SK-N-SH (cell line): ENCODE measurements at regions of chr22 and their contacts with region 1.

Region 1: GRCh38 chr22:37817705-37818408 is 5.3 kb upstream of the GALR3 start:
- DNase-seq: peak; percentile 98
- H3K4me3 ChIP-seq: peak overlapping the region; percentile 28 to 30; a peak in 3 of 4 replicates
- H3K27ac ChIP-seq: peak overlapping the region; percentile 38 to 73; a peak in 3 of 4 replicates
- H3K4me1 ChIP-seq: peaks cover 0 to 8% of the 10 kb centered on the region in 2 experiments; a peak in 1 of 4 replicates
- H3K27me3 ChIP-seq: no peaks in the 10 kb centered on the region
- CTCF ChIP-seq: peak; percentile 90
- EP300 ChIP-seq: no peak
- RAD21 ChIP-seq: peak; percentile 93

Region 2: DNA sequence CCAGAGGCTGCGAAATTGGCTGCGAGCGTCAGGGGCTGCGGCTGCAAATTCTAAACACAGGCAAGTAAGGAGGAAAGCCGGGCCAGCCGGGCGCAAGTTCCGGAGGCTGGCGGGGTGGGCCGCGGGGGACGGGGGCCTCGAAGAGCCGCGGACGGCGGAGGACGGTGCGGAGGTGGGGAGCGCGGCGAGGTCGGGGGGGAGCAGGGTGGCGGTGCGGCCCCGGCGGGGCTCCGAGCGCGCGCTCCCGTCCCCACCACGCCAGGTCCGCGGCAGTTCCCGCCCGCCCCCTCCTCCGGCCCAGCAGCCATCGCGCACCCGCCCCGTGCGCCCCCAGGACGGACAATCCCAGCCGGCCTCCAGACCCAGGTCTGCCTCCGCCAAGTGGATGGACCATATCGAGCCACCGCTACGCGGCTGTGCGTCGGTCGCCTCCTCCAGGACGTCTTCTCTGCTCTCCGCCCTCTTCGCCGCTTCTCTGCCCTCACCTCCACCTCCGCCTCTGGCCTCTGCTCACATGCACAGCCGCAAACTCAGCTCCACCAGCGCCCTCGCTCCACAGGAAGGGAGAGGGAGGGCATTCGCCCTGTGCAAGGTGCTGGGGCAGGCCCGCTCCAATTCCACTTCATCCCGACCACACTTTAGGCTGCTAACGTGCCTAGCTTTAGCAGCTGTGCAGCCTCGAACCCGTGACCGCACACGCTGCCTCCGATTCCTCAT is 397.7 kb before region 1 on chr22:
- CTCF ChIA-PET with region 1: no interaction called
- POLR2A ChIA-PET with region 1: no interaction called
- DNase-seq: peak; percentile 84
- H3K4me3 ChIP-seq: peak overlapping the region; percentile 40 to 51
- H3K27ac ChIP-seq: no peak overlapping the region
- H3K4me1 ChIP-seq: peaks cover 0 to 4% of the 10 kb centered on the region in 2 experiments; a peak in 1 of 4 replicates
- H3K27me3 ChIP-seq: peaks cover 5% of the 10 kb centered on the region; the same call in 1 of the 2 replicates
- CTCF ChIP-seq: no peak
- EP300 ChIP-seq: no peak
- RAD21 ChIP-seq: no peak

Region 3: DNA sequence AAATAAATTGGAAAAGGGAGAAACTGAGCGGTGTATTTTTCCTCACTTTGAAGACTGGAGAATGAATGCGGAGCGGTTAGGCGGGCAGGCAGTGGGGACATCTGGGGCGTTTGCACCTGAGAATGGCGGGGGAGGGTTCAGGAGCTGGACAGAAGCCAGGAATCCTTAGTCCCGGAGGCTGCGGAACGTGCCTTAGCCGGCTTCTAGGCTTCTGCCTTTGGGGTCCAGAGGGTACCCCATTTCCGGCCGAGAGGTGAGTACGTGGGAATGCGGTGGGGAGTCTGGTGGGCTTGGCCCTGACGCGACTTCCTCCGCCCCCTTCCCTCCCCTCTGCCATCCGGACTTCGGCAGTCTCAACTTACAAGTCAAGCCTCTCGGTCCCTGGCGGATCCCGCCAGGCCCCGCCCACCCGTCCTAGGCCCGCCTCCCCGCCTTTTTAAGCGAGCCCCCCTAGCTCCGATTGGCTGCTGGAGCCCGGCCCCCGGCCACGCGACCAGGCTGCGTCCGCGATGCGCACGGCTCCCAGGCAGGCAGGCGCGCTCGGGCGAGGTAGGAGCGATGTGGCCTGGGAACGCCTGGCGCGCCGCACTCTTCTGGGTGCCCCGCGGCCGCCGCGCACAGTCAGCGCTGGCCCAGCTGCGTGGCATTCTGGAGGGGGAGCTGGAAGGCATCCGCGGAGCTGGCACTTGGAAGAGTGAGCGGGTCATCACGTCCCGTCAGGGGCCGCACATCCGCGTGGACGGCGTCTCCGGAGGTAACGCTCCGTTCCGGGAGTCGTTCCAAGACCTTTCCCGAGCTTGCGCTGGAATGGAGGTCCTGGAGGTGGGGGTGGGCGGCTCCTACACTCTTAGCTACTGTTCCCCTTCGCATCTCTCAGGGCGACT is 10.2 kb before region 1 on chr22 and contains the start of gene GCAT:
- CTCF ChIA-PET with region 1: interaction called, 34 read pairs
- POLR2A ChIA-PET with region 1: interaction called, 13 read pairs
- DNase-seq: peak; percentile 99
- H3K4me3 ChIP-seq: peak within 1 kb of the TSS; percentile 70
- H3K27ac ChIP-seq: peak within 1 kb of the TSS; percentile 61
- H3K4me1 ChIP-seq: peaks cover 0 to 34% of the 10 kb centered on the region in 2 experiments; a peak in 2 of 4 replicates
- H3K27me3 ChIP-seq: no peaks in the 10 kb centered on the region
- CTCF ChIP-seq: no peak
- EP300 ChIP-seq: no peak
- RAD21 ChIP-seq: no peak
- polyA plus RNA-seq, gene GCAT: 20.3 and 24.2 TPM in 2 replicates

Region 4: GRCh38 chr22:37843741-37843990 is 25.8 kb after region 1 on chr22:
- CTCF ChIA-PET with region 1: interaction called, 20 read pairs
- POLR2A ChIA-PET with region 1: interaction called, 3 read pairs
- DNase-seq: peak; percentile 85
- H3K4me3 ChIP-seq: peak overlapping the region; percentile 63 to 88
- H3K27ac ChIP-seq: peak overlapping the region; percentile 79 to 88
- H3K4me1 ChIP-seq: peaks cover 9 to 10% of the 10 kb centered on the region in 2 experiments; a peak in 2 of 4 replicates
- H3K27me3 ChIP-seq: no peaks in the 10 kb centered on the region
- CTCF ChIP-seq: no peak
- EP300 ChIP-seq: no peak
- RAD21 ChIP-seq: no peak

Region 5: DNA sequence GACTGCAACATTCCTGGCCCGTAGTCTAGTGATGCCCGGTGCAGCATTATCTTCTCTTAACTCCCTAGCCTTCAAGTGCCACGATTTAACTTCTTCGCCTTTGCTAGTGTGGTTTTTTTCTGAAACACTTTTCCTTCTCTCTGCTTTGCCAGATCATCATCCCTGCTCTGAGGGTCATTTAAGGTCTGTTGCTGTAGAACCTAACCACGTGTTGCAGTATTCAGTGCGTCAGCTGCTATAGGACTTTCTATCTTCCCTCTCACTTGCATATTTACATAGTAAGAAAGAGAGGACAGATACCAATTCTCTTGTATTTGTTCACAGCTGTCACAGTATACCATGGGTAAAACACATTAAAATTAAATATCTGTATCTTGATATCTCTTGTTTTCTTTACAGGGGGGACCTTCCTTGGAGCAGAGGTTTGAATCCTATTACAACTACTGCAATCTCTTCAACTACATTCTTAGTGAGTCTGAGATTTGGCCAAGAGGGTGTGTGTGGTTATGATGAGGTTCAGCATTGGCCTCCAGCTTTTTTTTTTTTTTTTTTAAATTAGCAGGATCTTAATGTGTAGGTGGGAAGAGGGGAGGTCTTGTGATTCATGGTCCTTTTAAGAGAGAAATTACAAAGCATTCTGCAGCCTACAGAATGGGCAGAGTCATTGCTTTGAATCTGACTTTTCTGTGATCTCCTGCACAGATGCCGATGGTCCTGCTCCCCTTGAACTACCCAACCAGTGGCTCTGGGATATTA is 44.9 kb after region 1 on chr22:
- CTCF ChIA-PET with region 1: interaction called, 182 read pairs
- POLR2A ChIA-PET with region 1: interaction called, 3 read pairs
- DNase-seq: no peak
- H3K4me3 ChIP-seq: no peak overlapping the region
- H3K27ac ChIP-seq: no peak overlapping the region; a peak in 1 of 4 replicates
- H3K4me1 ChIP-seq: 0 out of 4 replicates have a peak, but pooled peaks cover 0 to 2% of the 10 kb centered on the region in 2 experiments
- H3K27me3 ChIP-seq: no peaks in the 10 kb centered on the region
- CTCF ChIP-seq: no peak
- EP300 ChIP-seq: no peak
- RAD21 ChIP-seq: no peak

Region 6: DNA sequence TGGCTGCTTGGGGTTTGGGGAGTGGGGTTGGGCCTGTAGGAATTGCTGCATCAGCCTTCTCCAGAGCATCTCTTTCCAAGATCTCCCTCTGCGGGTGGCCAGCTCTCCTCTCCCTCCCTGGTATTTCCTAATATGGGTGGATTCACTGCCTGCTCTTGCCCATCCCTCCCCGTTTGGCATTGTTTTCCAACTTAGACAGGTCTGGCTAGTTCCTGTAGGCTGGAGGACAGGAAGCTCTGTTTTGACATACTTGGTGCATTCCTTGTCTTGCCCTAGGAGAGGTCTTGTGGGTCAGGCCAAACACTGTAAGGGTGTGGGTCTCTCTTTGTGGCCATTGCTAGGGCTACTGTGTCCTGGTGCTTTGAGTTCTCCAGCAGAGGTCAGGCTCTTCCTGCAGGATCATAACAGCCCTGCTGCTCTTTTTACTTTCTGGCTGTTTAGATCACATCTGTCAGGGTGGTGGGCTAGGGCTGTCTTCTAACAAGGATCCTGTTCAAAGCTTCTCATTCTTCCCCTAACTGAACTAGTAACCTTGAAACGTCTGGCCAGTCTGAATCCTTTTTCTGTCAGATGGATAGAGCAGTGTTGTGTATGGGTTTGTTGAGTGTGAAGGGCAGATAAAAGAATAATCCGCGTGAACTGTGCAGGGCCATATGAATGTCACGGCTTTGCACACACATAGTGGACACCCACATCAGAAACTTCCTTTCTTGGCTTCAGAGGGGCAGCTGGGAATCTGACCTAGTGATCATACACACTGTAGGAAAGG is 69.9 kb after region 1 on chr22:
- CTCF ChIA-PET with region 1: interaction called, 16 read pairs
- POLR2A ChIA-PET with region 1: no interaction called
- DNase-seq: no peak
- H3K4me3 ChIP-seq: peak overlapping the region in 1 of 2 experiments; percentile 27; a peak in 1 of 4 replicates
- H3K27ac ChIP-seq: peak overlapping the region in 1 of 2 experiments; percentile 11; a peak in 1 of 4 replicates
- H3K4me1 ChIP-seq: peaks cover 0 to 5% of the 10 kb centered on the region in 2 experiments; a peak in 1 of 4 replicates
- H3K27me3 ChIP-seq: no peaks in the 10 kb centered on the region
- CTCF ChIP-seq: peak; percentile 59
- EP300 ChIP-seq: no peak
- RAD21 ChIP-seq: peak; percentile 42